Panc1 (cell line): ENCODE measurements at regions of chr3 and their contacts with region 1.

Region 1: DNA sequence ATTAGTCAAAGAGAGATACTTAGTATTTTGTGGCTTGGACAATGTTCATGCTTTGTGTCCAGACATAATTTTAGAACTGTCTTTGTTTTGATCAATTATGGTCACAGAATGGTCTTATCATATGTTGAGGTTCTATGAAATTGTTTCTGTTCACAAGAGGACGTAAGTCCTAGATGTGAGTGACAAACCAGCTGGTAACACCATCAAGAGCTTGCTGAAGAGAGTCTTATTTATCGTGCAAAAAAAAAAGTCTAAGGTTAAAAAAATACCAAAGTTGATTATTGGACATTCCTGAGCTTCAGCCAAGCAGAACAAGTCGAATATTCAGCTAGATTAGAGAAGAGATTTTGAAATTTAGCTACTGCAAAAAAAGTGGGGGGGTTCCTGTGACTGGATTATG is 495.9 kb upstream of the NAALADL2 start:
- DNase-seq: no peak
- ATAC-seq: no peak
- H3K4me3 ChIP-seq: no peak overlapping the region
- H3K27ac ChIP-seq: no peak overlapping the region
- H3K4me1 ChIP-seq: no peaks in the 10 kb centered on the region
- H3K27me3 ChIP-seq: no peaks in the 10 kb centered on the region
- CTCF ChIP-seq: no peak

Region 2: DNA sequence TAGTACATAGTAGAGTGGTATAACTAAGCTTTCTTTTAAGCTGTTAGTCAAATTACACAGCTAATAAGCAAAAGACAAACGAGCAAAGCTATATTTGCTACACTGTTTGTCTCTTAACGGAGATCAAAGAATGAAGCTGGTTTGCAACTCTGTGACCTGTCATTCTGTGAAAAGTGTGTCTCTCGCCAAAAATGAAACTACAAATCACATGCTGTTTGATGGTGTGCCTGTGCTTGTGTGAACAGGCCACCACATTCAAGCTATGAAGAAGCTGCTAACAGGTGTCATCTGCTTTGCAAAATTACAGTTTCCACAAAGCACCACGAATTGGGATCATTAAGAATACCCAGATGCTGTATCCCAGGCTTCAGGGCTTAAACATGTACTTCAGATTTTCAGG is 171.9 kb before region 1 on chr3:
- CTCF ChIA-PET with region 1: no interaction called
- POLR2A ChIA-PET with region 1: no interaction called
- in situ Hi-C with region 1: no loop called
- intact Hi-C with region 1: no loop called
- DNase-seq: no peak
- ATAC-seq: no peak
- H3K4me3 ChIP-seq: no peak overlapping the region
- H3K27ac ChIP-seq: no peak overlapping the region
- H3K4me1 ChIP-seq: no peaks in the 10 kb centered on the region
- H3K27me3 ChIP-seq: no peaks in the 10 kb centered on the region
- CTCF ChIP-seq: no peak

Region 3: GRCh38 chr3:174495311-174495710 is 132.1 kb after region 1 on chr3:
- CTCF ChIA-PET with region 1: no interaction called
- POLR2A ChIA-PET with region 1: no interaction called
- in situ Hi-C with region 1: no loop called
- intact Hi-C with region 1: loop called (anchors 5 kb)
- DNase-seq: no peak
- ATAC-seq: no peak
- H3K4me3 ChIP-seq: no peak overlapping the region
- H3K27ac ChIP-seq: no peak overlapping the region
- H3K4me1 ChIP-seq: no peaks in the 10 kb centered on the region; the same call in 1 of the 2 replicates
- H3K27me3 ChIP-seq: no peaks in the 10 kb centered on the region
- CTCF ChIP-seq: no peak